ENCODE measurements at regions of chr9 and their contacts with region 1.

Region 1: GRCh38 chr9:71604197-71605063 is 163.9 kb downstream of the CEMIP2 start:
- DNase-seq: peak; percentile 44 to 78
- ATAC-seq: peak; percentile 89 to 99
- H3K4me3 ChIP-seq: no peak overlapping the region
- H3K27ac ChIP-seq: peak overlapping the region; percentile 54 to 56
- H3K4me1 ChIP-seq: peaks cover 17% of the 10 kb centered on the region
- CTCF ChIP-seq: peak; percentile 90
- EP300 ChIP-seq: no peak
- POLR2A ChIP-seq: no peak
- RAD21 ChIP-seq: peak; percentile 94

Region 2: DNA sequence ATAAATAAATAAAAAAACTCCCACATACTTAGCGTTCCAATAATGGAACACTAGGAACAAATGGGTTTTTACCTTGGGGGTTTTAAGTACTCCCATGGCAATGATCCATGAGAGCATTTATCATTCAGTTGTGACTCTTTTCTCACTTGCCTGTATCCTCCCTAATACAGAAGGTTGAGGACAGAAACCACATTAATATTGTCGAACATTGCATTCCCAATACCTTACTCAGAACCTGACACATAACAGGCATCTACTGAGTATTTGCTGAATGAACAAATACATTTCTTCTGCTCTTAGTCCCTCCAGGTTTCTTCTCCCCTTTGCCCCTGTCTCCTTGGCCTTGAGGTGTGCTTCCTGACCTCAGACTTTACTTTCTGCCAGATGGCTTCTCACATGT is 12.0 kb before region 1 on chr9:
- CTCF ChIA-PET with region 1: interaction called, 21 read pairs
- POLR2A ChIA-PET with region 1: no interaction called
- DNase-seq: no peak
- ATAC-seq: 0 out of 6 replicates have a peak, but pooled peaks of 1 of the 2 experiments have one; percentile 27
- H3K4me3 ChIP-seq: no peak overlapping the region
- H3K27ac ChIP-seq: no peak overlapping the region
- H3K4me1 ChIP-seq: peaks cover 6% of the 10 kb centered on the region; the same call in 2 of the 3 replicates
- CTCF ChIP-seq: no peak
- EP300 ChIP-seq: no peak
- POLR2A ChIP-seq: no peak
- RAD21 ChIP-seq: no peak

Region 3: GRCh38 chr9:71614409-71615010 is 10.1 kb after region 1 on chr9:
- CTCF ChIA-PET with region 1: interaction called, 17 read pairs
- POLR2A ChIA-PET with region 1: no interaction called
- DNase-seq: no peak
- ATAC-seq: no peak
- H3K4me3 ChIP-seq: no peak overlapping the region
- H3K27ac ChIP-seq: no peak overlapping the region
- H3K4me1 ChIP-seq: peaks cover under 1% of the 10 kb centered on the region; the same call in 1 of the 3 replicates
- CTCF ChIP-seq: no peak
- EP300 ChIP-seq: no peak
- POLR2A ChIP-seq: no peak
- RAD21 ChIP-seq: no peak

Region 4: GRCh38 chr9:71647094-71647591 is 42.7 kb after region 1 on chr9:
- CTCF ChIA-PET with region 1: interaction called, 11 read pairs
- POLR2A ChIA-PET with region 1: no interaction called
- DNase-seq: peak in 1 of 2 experiments; percentile 45
- ATAC-seq: peak; percentile 21 to 41; a peak in 2 of 6 replicates
- H3K4me3 ChIP-seq: no peak overlapping the region
- H3K27ac ChIP-seq: peak overlapping the region; percentile 45 to 72
- H3K4me1 ChIP-seq: peaks cover 23% of the 10 kb centered on the region
- CTCF ChIP-seq: no peak
- EP300 ChIP-seq: no peak
- POLR2A ChIP-seq: no peak
- RAD21 ChIP-seq: no peak

Region 5: DNA sequence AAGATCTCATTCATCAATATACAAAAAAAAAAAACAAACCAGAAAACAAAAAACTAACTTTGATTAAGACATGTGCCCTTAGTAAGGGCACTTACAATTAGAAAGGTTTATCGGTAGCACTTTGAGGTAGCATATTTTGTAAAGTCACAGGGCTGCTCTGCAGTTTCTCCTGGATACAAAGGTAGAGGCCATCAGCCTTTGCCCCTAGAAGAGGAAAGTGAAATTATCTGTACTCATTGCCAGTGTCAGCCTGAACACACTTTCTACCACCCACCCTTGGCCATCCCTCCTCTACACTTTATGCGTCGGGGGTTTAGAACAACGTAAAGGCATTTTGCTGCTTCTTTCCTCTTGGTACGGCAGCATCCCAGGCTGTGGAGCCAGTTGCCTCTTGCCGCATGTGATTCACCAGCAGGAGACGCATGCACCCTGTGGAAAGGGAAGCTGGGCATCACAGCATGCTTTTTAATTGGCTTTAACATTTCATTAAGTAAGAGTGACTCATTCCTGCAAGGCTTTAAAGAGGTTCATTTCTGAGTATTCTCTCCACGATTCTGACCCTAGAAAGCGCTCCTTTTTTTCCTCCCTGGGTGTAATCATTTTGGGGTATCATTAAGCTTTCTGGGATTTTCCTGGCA is 79.3 kb after region 1 on chr9:
- CTCF ChIA-PET with region 1: interaction called, 23 read pairs
- POLR2A ChIA-PET with region 1: no interaction called
- DNase-seq: no peak
- ATAC-seq: no peak
- H3K4me3 ChIP-seq: no peak overlapping the region
- H3K27ac ChIP-seq: peak overlapping the region; percentile 93 to 94
- H3K4me1 ChIP-seq: peaks cover 89% of the 10 kb centered on the region
- CTCF ChIP-seq: no peak
- EP300 ChIP-seq: no peak
- POLR2A ChIP-seq: no peak
- RAD21 ChIP-seq: peak; percentile 45 to 48; a peak in 2 of 5 replicates

Region 6: GRCh38 chr9:71716138-71716909 is 111.9 kb after region 1 on chr9:
- CTCF ChIA-PET with region 1: interaction called, 16 read pairs
- POLR2A ChIA-PET with region 1: no interaction called
- DNase-seq: no peak
- ATAC-seq: no peak
- H3K4me3 ChIP-seq: no peak overlapping the region
- H3K27ac ChIP-seq: peak overlapping the region; percentile 38 to 75; a peak in 5 of 6 replicates
- H3K4me1 ChIP-seq: peaks cover 41% of the 10 kb centered on the region
- CTCF ChIP-seq: peak; percentile 59
- EP300 ChIP-seq: no peak
- POLR2A ChIP-seq: no peak
- RAD21 ChIP-seq: peak; percentile 27 to 56

Region 7: DNA sequence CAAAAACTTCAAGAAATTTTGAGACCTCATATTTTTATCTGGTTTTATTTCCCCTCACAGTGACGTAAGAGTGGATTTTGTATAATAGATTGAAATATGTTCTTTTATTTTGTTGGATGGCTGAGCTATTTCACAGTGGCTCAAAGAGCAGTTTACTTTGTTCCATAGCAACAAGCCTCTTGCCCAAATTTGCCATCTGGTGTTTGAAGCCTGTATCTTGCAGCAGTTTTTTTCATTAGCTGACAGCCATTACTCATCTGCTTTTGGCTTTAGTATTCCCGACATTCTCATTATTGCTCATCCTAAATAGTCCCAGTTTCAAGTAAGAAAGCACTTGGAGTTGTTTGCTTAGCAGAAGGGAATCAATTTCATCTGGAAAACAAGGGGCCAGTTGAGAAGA is 581.1 kb after region 1 on chr9:
- CTCF ChIA-PET with region 1: no interaction called
- POLR2A ChIA-PET with region 1: no interaction called
- DNase-seq: no peak
- ATAC-seq: no peak
- H3K4me3 ChIP-seq: no peak overlapping the region
- H3K27ac ChIP-seq: no peak overlapping the region
- H3K4me1 ChIP-seq: no peaks in the 10 kb centered on the region
- CTCF ChIP-seq: no peak
- EP300 ChIP-seq: no peak
- POLR2A ChIP-seq: no peak
- RAD21 ChIP-seq: no peak

Measured in A549 (cell line).